ENCODE measurements at regions of chr1 and their contacts with region 1.

Region 1: GRCh38 chr1:172398970-172399755 is 21.3 kb upstream of the C1orf105 start:
- DNase-seq: peak; percentile 21
- CTCF ChIP-seq: peak; percentile 35

Region 2: DNA sequence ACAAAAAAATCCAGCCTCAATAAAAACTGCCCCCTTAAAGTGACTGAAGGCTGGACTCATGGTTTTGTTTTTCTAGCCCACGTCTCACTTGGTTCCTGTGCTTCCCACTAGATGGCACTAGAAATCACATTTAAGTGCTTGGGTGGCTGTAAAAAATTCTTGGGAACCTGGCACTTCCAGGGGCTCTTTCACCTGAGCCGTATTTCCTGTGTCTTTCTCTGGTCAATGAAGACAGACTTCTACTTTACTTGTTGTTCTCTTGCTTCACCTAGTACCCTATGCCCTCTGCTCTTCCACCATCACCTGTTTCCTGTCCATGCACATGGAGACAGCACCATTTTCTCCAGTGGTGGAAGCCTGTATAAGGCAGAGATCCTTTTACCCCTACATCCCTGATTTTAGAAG is 597.7 kb before region 1 on chr1:
- in situ Hi-C with region 1: loop called (anchors 25 kb)
- DNase-seq: no peak
- CTCF ChIP-seq: peak; percentile 75

Region 3: GRCh38 chr1:172002725-172003345 is 396.3 kb before region 1 on chr1:
- in situ Hi-C with region 1: loop called (anchors 10 kb)
- DNase-seq: no peak
- CTCF ChIP-seq: peak; percentile 64

Region 4: DNA sequence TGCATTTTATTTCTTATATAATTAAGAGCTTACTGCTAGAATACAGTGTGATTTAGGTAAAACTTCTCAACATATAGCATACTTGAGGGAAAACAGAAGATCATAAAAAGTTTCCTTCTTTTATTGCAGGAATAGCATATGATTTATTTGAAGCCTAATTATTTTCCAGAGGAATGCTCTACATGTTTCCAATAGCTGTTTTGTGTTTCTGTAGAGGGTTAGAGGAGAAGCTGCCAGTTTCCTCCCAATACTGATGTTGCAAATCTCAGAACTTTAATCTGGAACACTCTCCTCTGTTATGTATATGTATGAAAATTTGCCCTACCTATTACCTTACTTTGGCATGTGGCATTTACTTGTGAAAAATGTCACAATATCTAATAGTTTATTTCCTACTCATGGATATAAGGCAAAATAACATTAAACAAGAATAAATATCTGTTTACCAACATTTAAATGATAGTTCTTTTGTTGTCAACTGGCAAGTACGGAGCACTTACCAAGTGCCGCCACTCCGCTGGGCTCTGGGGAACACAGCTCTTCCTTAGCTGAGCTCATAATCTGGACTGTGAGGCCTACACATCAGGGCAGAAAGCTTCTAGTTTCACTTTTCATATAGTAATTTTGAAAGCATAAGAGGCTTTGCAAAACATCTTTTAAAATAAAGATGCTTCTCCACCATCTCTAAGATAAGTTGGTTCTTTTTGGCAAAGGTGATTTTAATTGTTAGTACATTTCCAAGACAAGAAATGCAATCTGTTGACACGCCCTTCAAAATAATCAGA is 218.5 kb before region 1 on chr1:
- in situ Hi-C with region 1: loop called (anchors 25 kb)
- DNase-seq: peak; percentile 5
- CTCF ChIP-seq: no peak

Region 5: GRCh38 chr1:172343240-172344160 is 55.7 kb before region 1 on chr1:
- in situ Hi-C with region 1: loop called (anchors 10 kb)
- DNase-seq: no peak
- CTCF ChIP-seq: no peak